PC-9 (cell line): ENCODE measurements at regions of chr1 and their contacts with region 1.

Region 1: GRCh38 chr1:115189814-115190539 is 100.7 kb upstream of the TSPAN2 start:
- DNase-seq: peak; percentile 49 to 100
- H3K4me3 ChIP-seq: no peak overlapping the region; the same call in 1 of the 2 replicates
- H3K27ac ChIP-seq: peak overlapping the region; percentile 100
- H3K4me1 ChIP-seq: peaks cover 88% of the 10 kb centered on the region
- H3K27me3 ChIP-seq: no peaks in the 10 kb centered on the region
- CTCF ChIP-seq: no peak

Region 2: DNA sequence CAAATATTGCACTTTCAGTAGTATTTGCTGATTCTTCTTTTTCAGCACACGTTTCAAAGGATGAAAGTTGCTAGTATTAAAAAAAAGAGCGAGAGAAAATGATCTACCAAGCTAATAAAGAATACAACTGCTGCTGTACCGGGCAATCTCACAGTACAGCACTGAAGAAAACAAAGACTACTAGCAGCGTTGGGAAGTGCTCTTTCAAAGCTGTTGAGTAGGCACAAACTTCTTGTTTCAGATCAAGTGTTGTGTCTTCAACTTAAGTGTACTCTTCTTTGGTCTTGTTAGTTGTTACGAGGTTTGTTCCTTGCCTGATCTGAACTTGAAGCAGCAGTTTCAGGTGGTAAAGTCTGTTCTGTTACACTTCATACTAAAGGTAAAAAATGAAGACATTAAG is 440.1 kb before region 1 on chr1:
- CTCF ChIA-PET with region 1: no interaction called
- POLR2A ChIA-PET with region 1: interaction called, 10 read pairs
- intact Hi-C with region 1: no loop called
- DNase-seq: no peak
- H3K4me3 ChIP-seq: no peak overlapping the region
- H3K27ac ChIP-seq: no peak overlapping the region
- H3K4me1 ChIP-seq: peaks cover 8% of the 10 kb centered on the region
- H3K27me3 ChIP-seq: no peaks in the 10 kb centered on the region
- CTCF ChIP-seq: no peak

Region 3: GRCh38 chr1:115219937-115220336 is 30.0 kb after region 1 on chr1:
- CTCF ChIA-PET with region 1: no interaction called
- POLR2A ChIA-PET with region 1: no interaction called
- intact Hi-C with region 1: loop called (anchors 2 kb)
- DNase-seq: no peak
- H3K4me3 ChIP-seq: no peak overlapping the region
- H3K27ac ChIP-seq: no peak overlapping the region
- H3K4me1 ChIP-seq: peaks cover 66% of the 10 kb centered on the region
- H3K27me3 ChIP-seq: no peaks in the 10 kb centered on the region
- CTCF ChIP-seq: no peak

Region 4: DNA sequence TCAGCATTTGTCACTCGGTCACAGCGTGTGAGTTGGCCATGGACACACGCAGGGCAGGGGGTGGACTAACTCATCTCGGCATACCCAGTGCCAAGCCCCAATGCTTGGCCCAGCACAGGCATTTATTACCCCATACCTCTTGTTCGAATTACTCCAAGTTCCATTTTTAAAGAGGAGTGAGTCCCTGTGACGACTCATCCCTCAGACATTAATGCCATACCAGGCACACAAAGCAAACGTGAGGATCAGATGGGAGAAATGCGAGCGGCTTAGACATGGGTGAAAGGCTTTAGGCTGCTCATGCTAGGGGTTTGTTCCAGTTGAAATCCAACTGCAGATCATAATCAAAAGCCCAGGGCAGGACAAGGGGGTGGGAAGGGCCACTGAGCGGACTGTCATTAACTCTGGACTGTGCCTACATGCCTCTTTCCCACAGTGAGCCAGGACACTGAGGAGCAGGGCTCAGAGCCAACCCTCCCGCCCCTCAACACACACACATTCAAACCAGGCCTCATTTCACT is 266.5 kb after region 1 on chr1:
- CTCF ChIA-PET with region 1: interaction called, 18 read pairs
- POLR2A ChIA-PET with region 1: interaction called, 6 read pairs
- intact Hi-C with region 1: no loop called
- DNase-seq: peak; percentile 41 to 65
- H3K4me3 ChIP-seq: no peak overlapping the region
- H3K27ac ChIP-seq: no peak overlapping the region
- H3K4me1 ChIP-seq: peaks cover 54% of the 10 kb centered on the region
- H3K27me3 ChIP-seq: no peaks in the 10 kb centered on the region
- CTCF ChIP-seq: no peak

Region 5: DNA sequence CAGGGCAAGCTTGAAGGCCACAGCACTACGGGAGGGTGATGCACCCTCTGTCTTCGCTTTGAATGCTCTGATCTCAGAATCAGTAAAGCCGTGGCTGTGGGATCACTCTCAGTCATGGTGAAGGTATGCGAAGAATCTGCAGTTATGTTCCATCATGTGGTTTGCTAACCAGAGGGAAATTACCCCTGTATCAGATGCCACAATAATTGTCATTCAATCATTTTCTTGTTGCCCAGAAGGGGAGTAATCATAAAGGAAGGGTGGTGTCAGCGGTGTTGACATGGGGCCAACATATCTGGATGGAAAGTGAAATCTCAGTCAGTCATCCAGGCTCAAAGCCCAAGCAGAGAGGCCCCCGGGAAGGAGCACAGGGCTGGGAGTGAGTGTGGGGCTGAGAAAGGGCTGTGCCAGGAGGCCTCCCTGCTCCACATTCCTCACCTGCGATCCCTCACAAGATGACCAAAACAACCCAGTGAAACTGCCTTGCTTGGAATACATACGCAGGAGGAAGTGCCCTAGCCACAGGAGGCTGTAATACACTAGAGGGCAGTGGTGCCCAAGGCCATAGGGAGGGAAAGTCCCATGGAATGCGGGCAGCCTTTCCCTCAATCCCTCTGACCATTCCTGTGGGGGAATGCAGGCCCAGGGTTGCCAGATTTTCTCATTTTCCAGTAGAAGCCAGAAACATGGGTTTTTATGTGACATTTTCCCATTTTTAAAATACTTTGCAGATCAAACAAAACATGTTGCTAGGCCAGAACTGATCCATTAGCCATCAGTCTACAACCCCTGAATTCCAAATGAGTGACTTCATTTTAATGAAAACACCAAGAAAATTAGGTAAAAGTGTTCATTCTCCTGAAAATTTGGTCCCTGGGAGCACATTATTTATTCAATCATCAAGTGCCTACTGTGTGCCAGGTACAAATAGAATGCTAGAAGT is 356.1 kb after region 1 on chr1:
- CTCF ChIA-PET with region 1: no interaction called
- POLR2A ChIA-PET with region 1: no interaction called
- intact Hi-C with region 1: loop called (anchors 1 kb)
- DNase-seq: peak; percentile 92 to 99
- H3K4me3 ChIP-seq: peak overlapping the region; percentile 9; the same call in 1 of the 2 replicates
- H3K27ac ChIP-seq: peak overlapping the region; percentile 91
- H3K4me1 ChIP-seq: peaks cover 35% of the 10 kb centered on the region
- H3K27me3 ChIP-seq: no peaks in the 10 kb centered on the region
- CTCF ChIP-seq: peak; percentile 82